OCI-LY7 (cell line): ENCODE measurements at regions of chr9 and their contacts with region 1.

Region 1: GRCh38 chr9:6681147-6681956 is 35.8 kb upstream of the GLDC start:
- DNase-seq: peak; percentile 95
- H3K4me3 ChIP-seq: peak overlapping the region; percentile 85
- H3K27ac ChIP-seq: peak overlapping the region; percentile 89
- H3K4me1 ChIP-seq: peaks cover 32% of the 10 kb centered on the region
- CTCF ChIP-seq: no peak

Region 2: DNA sequence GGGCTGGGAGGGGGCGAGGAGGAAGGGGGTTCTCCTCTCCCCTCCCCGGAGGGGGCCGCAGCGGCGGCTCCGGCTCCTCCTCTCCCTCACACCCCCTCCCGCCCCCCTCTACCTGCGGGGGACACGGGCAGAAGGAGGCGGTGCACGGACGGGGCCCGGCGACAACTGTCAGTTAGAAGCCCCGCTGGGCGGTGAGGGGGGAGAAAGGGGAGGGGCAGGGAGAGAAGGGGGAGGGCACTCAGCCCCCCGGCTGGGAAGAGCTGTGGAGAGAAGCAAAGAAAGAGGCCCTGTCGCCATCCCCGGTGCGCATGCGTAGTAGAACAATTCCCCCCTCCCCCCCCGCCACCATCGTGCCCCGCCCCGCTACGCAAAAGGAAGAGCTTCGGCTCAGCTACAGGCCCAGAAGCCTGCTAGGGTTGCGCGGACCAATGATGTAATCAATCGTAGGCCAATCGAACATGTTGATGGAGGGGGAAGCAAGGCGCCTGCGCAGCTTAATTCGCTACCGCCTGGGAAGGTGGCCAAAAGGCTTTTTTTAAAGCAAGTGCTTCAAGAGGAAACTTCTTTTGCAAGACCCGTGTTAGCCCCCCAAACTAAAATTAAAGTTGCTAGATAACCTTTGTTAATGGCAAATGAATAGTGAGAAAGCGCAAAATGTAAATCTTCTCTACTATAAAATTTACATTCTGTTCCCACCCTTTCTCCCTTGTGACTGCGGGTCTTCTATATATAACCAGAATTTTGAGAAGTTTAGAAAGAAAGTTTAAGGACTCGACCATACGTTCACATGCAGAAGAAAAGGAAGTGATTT is 673.0 kb before region 1 on chr9:
- CTCF ChIA-PET with region 1: no interaction called
- POLR2A ChIA-PET with region 1: interaction called, 4 read pairs
- intact Hi-C with region 1: loop called (anchors 5 kb)
- DNase-seq: peak; percentile 98
- H3K4me3 ChIP-seq: peak overlapping the region; percentile 94
- H3K27ac ChIP-seq: peak overlapping the region; percentile 70
- H3K4me1 ChIP-seq: peaks cover 56% of the 10 kb centered on the region
- CTCF ChIP-seq: no peak

Region 3: DNA sequence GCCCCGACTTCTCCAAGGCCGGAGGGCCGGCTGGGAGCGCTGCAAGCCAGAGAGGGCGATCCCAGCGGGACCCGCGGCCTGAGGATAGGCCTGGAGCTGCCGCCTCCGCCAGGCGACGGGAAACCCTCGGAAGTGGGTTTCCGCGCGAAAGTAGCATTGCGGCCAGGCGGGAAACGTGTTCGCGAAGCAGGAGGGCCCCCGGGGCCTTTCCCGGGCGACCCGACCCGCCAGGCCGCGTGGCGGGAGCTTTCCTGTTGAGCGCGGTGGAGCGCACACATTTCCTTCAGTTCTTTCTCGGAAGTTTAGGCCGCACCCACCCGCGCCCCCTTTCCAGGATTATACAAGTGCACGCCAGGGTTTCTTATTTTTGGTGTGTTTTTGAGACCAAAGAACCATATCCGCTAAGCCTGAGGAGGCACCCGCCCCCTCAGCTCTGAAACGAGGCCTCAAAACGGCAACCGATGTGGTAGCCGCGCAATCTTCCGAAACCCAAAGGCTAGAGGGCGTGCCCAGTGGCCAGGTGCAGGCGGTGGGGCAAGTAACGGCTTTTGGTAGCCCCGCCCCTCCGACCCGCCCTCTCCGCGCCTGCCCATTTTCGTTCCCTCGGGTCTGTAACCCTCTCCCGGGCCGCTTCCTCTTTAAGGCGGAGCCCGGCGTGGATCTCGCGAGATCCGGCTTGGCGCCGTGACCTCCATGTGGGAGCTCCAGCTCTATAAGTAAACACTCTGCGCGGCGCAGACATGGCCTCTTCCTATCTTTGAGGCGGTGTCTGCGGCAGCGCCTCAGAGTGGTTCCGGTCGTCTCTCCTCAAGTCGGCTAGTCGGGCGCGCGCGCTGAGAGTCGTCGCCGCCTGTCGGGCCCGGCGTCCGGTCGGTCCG is 268.6 kb before region 1 on chr9 and contains the start of gene UHRF2:
- CTCF ChIA-PET with region 1: no interaction called
- POLR2A ChIA-PET with region 1: interaction called, 8 read pairs
- intact Hi-C with region 1: loop called (anchors 1 kb)
- DNase-seq: peak; percentile 99
- H3K4me3 ChIP-seq: peak within 1 kb of the TSS; percentile 83
- H3K27ac ChIP-seq: peak within 1 kb of the TSS; percentile 94
- H3K4me1 ChIP-seq: peaks cover 49% of the 10 kb centered on the region
- CTCF ChIP-seq: no peak
- total RNA-seq, gene UHRF2: 76.1 and 76.6 TPM in 2 replicates

Region 4: GRCh38 chr9:6692881-6693361 is 11.6 kb after region 1 on chr9:
- CTCF ChIA-PET with region 1: no interaction called
- POLR2A ChIA-PET with region 1: interaction called, 14 read pairs
- intact Hi-C with region 1: no loop called
- DNase-seq: no peak
- H3K4me3 ChIP-seq: no peak overlapping the region
- H3K27ac ChIP-seq: no peak overlapping the region
- H3K4me1 ChIP-seq: peaks cover 32% of the 10 kb centered on the region
- CTCF ChIP-seq: no peak

Region 5: GRCh38 chr9:6757456-6758247 is 76.3 kb after region 1 on chr9 and contains the start of gene KDM4C:
- CTCF ChIA-PET with region 1: no interaction called
- POLR2A ChIA-PET with region 1: interaction called, 17 read pairs
- intact Hi-C with region 1: loop called (anchors 1 kb)
- DNase-seq: peak; percentile 97
- H3K4me3 ChIP-seq: peak within 1 kb of the TSS; percentile 94
- H3K27ac ChIP-seq: peak within 1 kb of the TSS; percentile 80
- H3K4me1 ChIP-seq: peaks cover 22% of the 10 kb centered on the region
- CTCF ChIP-seq: no peak
- total RNA-seq, gene KDM4C: 51.5 and 57.9 TPM in 2 replicates